ENCODE measurements at regions of chr5 and their contacts with region 1.

Region 1: DNA sequence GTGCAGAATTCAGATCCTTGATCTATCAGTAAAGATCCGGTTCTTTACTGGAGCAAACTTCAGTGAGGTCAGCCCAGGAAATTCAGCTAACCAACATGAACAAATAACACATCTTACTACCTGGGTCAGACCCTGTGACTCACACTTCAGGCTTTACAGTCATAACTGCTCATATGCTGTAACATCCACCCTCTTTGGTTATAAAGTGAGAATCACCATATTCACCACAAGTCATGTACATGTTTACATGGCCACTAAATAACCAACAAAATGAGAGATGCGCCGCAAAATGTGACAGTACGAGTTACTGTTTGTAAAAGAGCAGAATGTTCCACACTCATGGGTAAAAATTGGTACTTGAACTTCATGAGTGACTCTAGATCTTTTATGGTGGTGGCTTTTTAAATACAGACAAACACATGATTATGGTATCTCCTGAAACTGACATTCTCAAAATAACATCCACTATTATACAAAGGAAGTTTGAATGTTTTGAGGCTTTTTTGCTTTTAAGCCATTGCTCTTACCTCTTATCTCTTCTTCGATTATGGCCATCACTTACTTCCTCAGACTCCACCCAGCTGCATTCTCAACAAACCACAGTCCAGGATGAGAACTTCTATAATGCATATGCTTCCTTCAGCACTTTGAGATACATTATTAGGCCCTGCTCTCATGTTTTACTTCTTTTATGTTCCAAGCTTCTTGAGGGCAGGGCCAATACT is 516.6 kb downstream of the RAB3C start:
- DNase-seq: peak; percentile 74
- H3K4me3 Mint-ChIP-seq: peak overlapping the region; percentile 51
- H3K27ac Mint-ChIP-seq: peak overlapping the region; percentile 88
- H3K4me1 Mint-ChIP-seq: peaks cover 76% of the 10 kb centered on the region
- H3K27me3 Mint-ChIP-seq: peaks cover 2% of the 10 kb centered on the region

Region 2: GRCh38 chr5:59039296-59040023 is 60.0 kb before region 1 on chr5:
- CTCF ChIA-PET with region 1: interaction called, 7 read pairs
- POLR2A ChIA-PET with region 1: interaction called, 21 read pairs
- DNase-seq: peak; percentile 95
- H3K4me3 Mint-ChIP-seq: peak overlapping the region; percentile 84
- H3K27ac Mint-ChIP-seq: peak overlapping the region; percentile 97
- H3K4me1 Mint-ChIP-seq: peaks cover 46% of the 10 kb centered on the region
- H3K27me3 Mint-ChIP-seq: no peaks in the 10 kb centered on the region

Region 3: GRCh38 chr5:59133682-59134261 is 34.3 kb after region 1 on chr5:
- CTCF ChIA-PET with region 1: interaction called, 6 read pairs
- POLR2A ChIA-PET with region 1: interaction called, 39 read pairs
- DNase-seq: no peak
- H3K4me3 Mint-ChIP-seq: no peak overlapping the region
- H3K27ac Mint-ChIP-seq: no peak overlapping the region
- H3K4me1 Mint-ChIP-seq: peaks cover 49% of the 10 kb centered on the region
- H3K27me3 Mint-ChIP-seq: no peaks in the 10 kb centered on the region

Region 4: DNA sequence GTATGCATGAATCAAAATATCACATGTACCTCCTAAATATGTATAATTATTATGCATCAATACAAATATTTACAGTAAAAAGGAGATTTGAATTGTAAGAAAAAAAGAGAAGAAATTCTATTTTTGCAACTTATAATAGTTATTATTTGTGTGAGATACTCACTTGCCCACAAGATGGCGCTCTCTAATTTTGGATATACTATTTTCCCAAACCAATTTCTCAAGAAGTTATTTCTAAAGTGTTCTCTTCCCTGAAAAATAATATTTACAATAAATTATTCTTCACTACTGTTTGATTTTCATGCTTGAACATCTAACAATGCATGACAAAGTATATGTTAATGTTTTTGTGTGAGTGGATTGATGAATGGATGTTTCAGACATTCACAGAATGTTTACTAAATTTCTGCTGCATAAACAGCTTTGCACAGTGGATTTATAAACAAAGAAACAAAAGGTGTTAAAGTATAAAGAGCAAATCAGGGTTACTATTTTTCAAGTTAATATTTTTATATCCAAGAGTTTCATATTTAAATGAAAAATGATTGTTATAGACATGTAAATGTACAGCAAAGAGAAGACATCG is 290.7 kb after region 1 on chr5:
- CTCF ChIA-PET with region 1: no interaction called
- POLR2A ChIA-PET with region 1: no interaction called
- DNase-seq: no peak
- H3K4me3 Mint-ChIP-seq: no peak overlapping the region
- H3K27ac Mint-ChIP-seq: no peak overlapping the region
- H3K4me1 Mint-ChIP-seq: no peaks in the 10 kb centered on the region
- H3K27me3 Mint-ChIP-seq: peaks cover 17% of the 10 kb centered on the region

Measured in activated CD4-positive, alpha-beta memory T cell treated with anti-CD3 and anti-CD28 coated beads, Interleukin-2, amount 10 ng/mL, durations not matched to agents 7 days and 5 days (primary cell).